HEK293T (cell line): ENCODE measurements at regions of chr3 and their contacts with region 1.

Region 1: DNA sequence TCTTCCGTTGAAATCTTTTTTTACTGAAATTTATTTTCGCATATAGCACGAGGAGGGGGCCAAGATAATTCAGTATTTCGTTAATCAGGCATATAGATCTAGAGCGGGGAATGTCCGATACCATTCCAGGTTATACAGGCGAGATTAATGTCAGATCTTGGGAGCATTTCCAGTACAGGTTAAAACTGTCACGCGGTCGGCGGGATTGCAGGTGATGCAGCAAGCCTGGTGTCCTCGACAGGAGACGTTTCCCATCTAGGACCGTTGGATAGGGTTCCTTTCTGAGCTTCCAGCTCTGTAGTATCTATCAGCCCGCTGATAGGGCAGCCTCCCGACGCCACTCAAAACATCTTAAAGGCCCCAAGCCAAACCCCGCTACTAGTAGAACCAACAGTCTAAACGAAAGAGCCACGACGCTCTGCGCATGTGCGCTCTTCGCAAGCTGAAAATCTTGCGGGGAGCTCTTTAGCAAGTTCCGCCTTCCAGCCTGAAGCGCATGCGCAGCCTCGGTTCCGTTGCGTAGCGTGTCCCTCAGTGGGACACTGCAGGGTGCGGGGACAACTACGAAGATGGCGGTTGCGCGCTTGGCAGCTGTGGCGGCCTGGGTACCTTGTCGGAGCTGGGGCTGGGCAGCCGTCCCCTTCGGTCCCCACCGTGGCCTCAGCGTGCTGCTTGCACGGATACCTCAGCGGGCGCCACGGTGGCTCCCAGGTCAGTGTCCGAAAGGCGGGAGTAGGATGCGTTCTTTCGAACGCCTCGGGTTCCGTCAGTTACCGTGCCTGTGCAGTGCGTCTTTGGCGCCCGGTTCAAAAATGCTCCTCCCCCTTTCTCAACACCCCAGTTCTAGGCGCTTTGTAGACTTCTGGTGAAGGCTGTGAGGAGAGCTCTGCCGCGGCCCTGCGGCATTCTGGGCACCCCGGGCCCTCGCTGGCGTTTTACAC is at the start of gene ABHD10:
- DNase-seq: peak; percentile 94

Region 2: GRCh38 chr3:111846717-111847116 is 132.0 kb before region 1 on chr3:
- CTCF ChIA-PET with region 1: no interaction called
- POLR2A ChIA-PET with region 1: no interaction called
- DNase-seq: no peak

Region 3: DNA sequence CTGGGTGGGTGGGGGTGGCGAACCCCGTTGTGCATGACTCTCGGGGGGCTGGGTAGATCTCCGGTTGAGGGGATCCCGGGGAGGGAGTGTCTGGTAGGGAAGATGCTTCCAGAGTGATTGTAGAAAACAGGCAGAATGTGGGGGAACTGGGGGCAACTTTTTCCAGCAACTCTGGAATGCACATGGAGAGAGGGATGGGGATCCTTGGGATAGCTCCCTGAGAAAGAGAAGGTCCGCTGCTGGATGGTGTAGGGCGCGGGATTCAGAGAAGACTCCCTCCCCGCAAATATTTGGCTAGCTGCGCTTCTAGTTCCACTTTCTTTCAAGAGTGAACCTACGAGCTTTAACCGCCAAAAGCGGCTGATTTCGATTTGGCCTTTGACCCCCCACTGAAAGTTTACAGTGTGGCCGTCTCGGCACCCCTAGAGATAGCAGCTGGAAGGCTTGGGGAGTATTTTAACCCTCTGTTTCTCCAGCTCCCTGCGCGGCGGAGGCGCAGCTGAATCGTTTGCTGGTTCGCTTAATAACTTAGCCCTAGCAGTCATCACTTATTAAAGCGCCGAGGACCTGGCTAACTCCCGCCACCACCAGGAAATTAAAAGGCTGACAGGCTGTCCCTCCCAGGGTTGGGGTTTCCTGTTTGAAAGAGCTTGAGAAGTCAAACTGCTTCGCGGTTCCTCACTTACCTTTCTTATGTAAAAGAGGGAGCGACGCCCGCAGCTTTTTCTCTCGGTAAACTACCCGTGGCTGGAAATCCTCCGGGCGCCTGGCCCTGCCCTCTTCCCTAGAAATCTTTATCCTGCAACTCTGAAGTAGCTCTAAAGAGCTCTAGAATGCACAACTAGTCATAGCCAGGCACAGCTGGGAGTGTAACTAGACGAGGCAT is 118.5 kb before region 1 on chr3:
- CTCF ChIA-PET with region 1: interaction called, 6 read pairs
- POLR2A ChIA-PET with region 1: interaction called, 20 read pairs
- DNase-seq: peak; percentile 69

Region 4: GRCh38 chr3:111989061-111989678 is 10.4 kb after region 1 on chr3:
- CTCF ChIA-PET with region 1: interaction called, 8 read pairs
- POLR2A ChIA-PET with region 1: interaction called, 23 read pairs
- DNase-seq: peak; percentile 27

Region 5: GRCh38 chr3:112002096-112002971 is 23.6 kb after region 1 on chr3:
- CTCF ChIA-PET with region 1: no interaction called
- POLR2A ChIA-PET with region 1: interaction called, 13 read pairs
- DNase-seq: no peak

Region 6: DNA sequence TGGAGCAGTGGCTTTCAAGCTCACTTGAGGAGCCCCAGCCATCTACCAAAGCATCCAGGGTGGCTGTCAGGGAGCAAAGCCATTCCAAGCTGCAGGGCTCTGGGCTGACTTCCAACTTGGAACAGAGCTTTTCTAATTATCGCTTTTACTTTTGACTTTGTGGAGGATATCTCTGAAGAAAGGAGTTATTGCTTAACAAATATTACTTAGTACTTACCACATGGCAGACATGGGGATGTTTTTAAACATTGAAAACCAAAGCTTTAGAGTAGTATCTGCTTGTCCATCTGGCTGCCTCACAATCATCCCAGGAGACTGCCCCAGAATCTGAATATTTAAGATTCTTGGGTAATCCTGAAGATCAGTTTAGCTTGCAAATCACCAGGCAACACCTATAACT is 28.9 kb after region 1 on chr3:
- CTCF ChIA-PET with region 1: interaction called, 10 read pairs
- POLR2A ChIA-PET with region 1: interaction called, 18 read pairs
- DNase-seq: no peak

Region 7: DNA sequence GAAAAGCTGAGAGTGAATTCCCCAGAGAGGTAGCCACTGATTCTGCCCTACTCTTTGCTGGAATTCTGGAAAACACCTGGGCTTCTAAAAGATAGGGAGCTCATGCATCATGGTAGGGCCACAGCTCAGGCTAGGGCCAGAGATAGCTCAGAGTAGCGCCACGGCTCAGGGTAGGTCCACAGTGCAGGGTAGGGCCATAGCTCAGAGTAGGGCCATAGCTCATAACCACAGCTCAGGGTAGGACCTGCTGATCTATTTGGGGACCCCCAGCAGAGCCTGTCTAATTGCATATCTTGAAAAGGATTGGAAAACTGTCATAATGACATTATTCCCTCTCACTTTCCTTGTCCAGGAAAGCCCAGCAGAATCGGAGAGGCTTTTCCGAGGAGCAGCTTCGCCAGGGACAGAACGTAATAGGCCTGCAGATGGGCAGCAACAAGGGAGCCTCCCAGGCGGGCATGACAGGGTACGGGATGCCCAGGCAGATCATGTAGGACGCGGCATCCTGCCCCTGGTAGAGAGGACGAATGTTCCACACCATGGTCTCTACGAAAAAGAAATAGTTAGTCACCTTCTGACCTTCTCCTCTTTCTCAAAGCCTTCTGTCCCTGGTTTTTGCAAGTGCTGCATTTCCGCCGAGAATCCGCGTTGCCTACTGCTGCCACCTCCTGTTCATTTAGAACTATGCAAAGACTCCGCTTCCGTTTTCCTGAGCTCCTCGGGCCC is 34.5 kb after region 1 on chr3:
- CTCF ChIA-PET with region 1: interaction called, 10 read pairs
- POLR2A ChIA-PET with region 1: interaction called, 18 read pairs
- DNase-seq: peak; percentile 48

Region 8: GRCh38 chr3:112032098-112032731 is 53.5 kb after region 1 on chr3:
- CTCF ChIA-PET with region 1: no interaction called
- POLR2A ChIA-PET with region 1: interaction called, 12 read pairs
- DNase-seq: no peak